Ascending aorta (tissue), 2 donors: ENCODE measurements at regions of chr17 and their contacts with region 1.

Region 1: DNA sequence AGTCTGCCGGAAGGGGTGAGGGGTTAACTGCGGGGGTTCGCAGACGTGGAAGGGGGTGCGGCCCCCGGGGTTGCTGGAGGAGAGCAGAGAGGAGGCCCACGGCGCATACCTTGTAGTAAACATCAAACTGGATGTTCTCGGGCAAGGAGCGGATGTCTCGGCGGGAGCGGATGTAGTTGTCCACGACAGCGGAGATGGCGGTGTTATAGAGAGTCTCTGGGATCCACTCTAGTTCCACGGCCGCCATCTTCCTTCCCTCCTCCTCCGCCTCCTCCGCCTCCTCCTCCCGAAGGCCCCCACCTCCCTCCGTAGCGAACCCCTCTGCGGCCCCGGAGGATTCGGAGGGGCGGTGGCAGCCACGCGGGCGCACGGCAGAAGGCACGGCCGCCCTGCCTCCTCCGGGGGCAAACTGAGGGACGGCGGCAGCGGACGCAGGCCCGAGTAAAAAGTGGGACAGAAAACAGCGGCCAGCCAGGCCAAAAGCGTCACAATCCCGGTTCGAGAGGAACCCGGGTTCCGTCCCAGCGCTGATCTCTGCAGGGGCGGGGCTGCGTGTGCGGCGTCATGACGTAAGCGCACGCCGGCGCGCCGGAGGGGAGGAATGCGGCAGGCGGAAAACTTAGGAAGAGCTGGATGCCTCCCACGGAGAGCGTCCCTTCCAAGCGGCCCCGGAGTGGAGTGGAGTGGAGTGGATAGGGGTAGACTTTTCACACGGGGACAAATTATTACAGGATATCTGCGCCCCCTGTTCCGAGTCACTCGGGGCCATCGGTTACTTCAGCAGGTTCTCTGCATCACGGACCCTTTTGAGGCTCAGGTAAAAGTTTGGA is at the start of gene APPBP2:
- DNase-seq: peak; percentile 27 to 90
- H3K4me3 ChIP-seq: peak within 1 kb of the TSS; percentile 96 to 97
- H3K27ac ChIP-seq: peak within 1 kb of the TSS; percentile 96 to 100
- H3K4me1 ChIP-seq: peaks cover 3 to 33% of the 10 kb centered on the region in 2 donors
- H3K27me3 ChIP-seq: no peaks in the 10 kb centered on the region
- CTCF ChIP-seq: no peak
- total RNA-seq, gene APPBP2: 8.6 TPM

Region 2: GRCh38 chr17:59466946-59467801 is 1058.7 kb before region 1 on chr17:
- intact Hi-C with region 1: no loop called
- DNase-seq: no peak
- H3K4me3 ChIP-seq: no peak overlapping the region
- H3K27ac ChIP-seq: no peak overlapping the region
- H3K4me1 ChIP-seq: no peaks in the 10 kb centered on the region
- H3K27me3 ChIP-seq: no peaks in the 10 kb centered on the region
- CTCF ChIP-seq: no peak

Region 3: GRCh38 chr17:59753522-59754467 is 772.1 kb before region 1 on chr17:
- intact Hi-C with region 1: no loop called
- DNase-seq: no peak
- H3K4me3 ChIP-seq: peak overlapping the region in 1 of 2 donors; percentile 30
- H3K27ac ChIP-seq: peak overlapping the region; percentile 56 to 65
- H3K4me1 ChIP-seq: peaks cover 0 to 17% of the 10 kb centered on the region in 2 donors
- H3K27me3 ChIP-seq: no peaks in the 10 kb centered on the region
- CTCF ChIP-seq: peak; percentile 60 to 69 (median 66)

Region 4: GRCh38 chr17:60392042-60392844 is 133.7 kb before region 1 on chr17 and contains the start of gene USP32:
- intact Hi-C with region 1: loop called (anchors 1 kb)
- DNase-seq: peak; percentile 94 to 99
- H3K4me3 ChIP-seq: peak within 1 kb of the TSS; percentile 90 to 91
- H3K27ac ChIP-seq: peak within 1 kb of the TSS; percentile 88 to 93
- H3K4me1 ChIP-seq: peaks cover 0 to 17% of the 10 kb centered on the region in 2 donors
- H3K27me3 ChIP-seq: no peaks in the 10 kb centered on the region
- CTCF ChIP-seq: peak in 2 of 3 experiments; percentile 22 to 25
- total RNA-seq, gene USP32: 11.9 TPM

Region 5: DNA sequence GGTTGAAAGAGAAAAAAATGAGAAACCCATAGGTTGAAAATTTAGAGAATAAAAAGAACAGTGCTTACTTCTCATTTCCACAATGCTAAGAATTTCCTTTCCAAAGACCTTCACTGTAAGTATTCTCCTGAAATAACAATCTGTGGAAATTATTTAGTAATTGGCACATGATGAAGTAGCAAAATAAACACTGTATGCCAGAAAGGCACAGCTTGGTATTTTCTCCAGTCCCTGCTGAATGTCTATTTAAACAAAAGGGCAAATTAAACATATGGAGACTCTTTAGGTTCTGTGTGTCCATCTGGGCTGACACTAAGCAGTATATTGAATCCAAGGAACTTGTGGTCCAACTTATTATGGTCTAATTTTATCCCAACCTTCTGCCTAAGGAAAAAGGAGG is 57.5 kb before region 1 on chr17:
- intact Hi-C with region 1: loop called (anchors 10 kb)
- DNase-seq: no peak
- H3K4me3 ChIP-seq: no peak overlapping the region
- H3K27ac ChIP-seq: peak overlapping the region in 1 of 2 donors; percentile 20
- H3K4me1 ChIP-seq: peaks cover 4 to 28% of the 10 kb centered on the region in 2 donors
- H3K27me3 ChIP-seq: no peaks in the 10 kb centered on the region
- CTCF ChIP-seq: no peak

Region 6: DNA sequence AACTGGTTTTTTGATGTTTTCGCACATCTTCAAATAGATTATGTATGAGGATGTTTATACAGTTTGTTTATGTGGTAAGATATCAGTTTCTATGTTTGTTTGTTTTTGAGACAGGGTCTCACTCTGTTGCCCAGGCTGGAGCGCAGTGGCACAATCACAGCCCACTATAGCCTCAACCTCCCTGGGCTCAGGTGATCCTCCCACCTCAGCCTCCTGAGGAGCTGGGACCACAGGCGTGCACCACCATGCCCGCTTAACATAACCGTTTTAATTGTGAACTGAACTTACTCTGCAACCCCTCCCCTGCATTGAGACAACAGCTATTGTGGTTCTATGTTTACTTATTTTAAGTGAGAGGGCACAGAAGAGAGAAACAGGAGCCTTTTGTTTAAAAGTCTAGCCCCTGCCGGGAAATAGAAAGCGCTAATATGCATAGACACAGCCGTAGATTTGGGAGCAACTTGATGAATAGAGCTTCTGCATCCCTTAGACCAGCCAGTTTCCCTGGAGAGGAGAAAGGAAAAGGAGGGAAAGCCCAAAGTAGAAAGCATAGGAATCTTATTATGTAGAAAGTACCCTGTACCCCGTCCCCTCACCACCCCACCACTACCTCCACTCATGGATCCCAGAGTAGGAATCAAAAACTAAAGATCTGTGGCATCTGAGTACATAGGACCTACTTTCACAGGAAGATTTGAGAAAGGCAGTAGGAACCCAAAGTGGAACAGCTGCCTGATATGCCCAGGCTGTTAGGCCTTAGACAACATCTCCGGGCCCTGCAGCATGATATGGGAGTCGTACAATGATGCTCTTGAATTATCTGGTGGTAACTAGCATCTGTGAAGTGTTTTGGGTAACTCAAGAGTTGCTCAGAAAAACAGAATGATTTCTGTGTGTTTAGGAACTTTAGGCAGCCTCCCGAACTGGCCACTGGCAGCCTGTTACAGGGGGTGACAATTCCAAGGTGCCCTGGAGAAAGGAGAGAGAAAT is 19.9 kb after region 1 on chr17:
- intact Hi-C with region 1: no loop called
- DNase-seq: no peak
- H3K4me3 ChIP-seq: no peak overlapping the region
- H3K27ac ChIP-seq: no peak overlapping the region
- H3K4me1 ChIP-seq: no peaks in the 10 kb centered on the region
- H3K27me3 ChIP-seq: no peaks in the 10 kb centered on the region
- CTCF ChIP-seq: no peak

Region 7: GRCh38 chr17:60577147-60577915 is 51.4 kb after region 1 on chr17:
- intact Hi-C with region 1: loop called (anchors 5 kb)
- DNase-seq: peak in 1 of 2 donors; percentile 71
- H3K4me3 ChIP-seq: peak overlapping the region; percentile 34 to 60
- H3K27ac ChIP-seq: peak overlapping the region; percentile 47 to 52
- H3K4me1 ChIP-seq: peaks cover 0 to 7% of the 10 kb centered on the region in 2 donors
- H3K27me3 ChIP-seq: no peaks in the 10 kb centered on the region
- CTCF ChIP-seq: peak in 2 of 3 experiments; percentile 37 to 56

Region 8: DNA sequence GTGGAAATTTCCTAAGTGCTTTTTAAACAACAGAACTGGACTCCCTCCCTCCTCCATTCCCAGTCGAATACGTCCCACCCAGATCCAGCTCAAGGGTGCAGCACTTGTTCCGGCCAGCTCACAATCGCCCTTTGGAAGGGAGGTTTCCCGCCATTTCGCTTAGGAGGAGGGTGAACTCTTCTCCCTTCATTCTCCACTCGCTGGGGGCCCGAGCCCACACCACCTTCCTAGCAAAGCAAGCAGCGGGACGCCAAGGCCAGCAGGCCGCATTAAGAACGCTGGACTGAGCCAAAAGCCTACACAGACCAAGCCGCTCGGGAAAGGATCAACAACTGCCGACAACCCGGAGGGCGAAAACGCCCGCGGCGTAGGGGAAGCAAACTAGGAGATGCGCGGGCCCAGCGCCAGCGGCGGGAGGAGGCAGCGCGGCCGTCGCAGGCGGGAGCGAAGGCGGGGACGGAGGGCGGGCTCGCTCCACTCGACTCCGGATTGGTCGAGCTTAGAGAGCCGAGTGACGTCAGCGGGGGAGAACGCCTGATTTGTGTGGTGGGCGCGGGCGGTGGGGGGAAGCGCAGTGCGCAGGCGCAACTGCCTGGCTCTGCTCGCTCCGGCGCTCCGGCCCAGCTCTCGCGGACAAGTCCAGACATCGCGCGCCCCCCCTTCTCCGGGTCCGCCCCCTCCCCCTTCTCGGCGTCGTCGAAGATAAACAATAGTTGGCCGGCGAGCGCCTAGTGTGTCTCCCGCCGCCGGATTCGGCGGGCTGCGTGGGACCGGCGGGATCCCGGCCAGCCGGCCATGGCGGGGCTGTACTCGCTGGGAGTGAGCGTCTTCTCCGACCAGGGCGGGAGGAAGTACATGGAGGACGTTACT is 74.0 kb after region 1 on chr17 and contains the start of gene PPM1D:
- intact Hi-C with region 1: loop called (anchors 1 kb)
- DNase-seq: peak; percentile 94 to 99
- H3K4me3 ChIP-seq: peak within 1 kb of the TSS; percentile 73 to 94
- H3K27ac ChIP-seq: peak within 1 kb of the TSS; percentile 97 to 98
- H3K4me1 ChIP-seq: peaks cover 0 to 15% of the 10 kb centered on the region in 2 donors
- H3K27me3 ChIP-seq: no peaks in the 10 kb centered on the region
- CTCF ChIP-seq: peak in 1 of 3 experiments; percentile 11
- total RNA-seq, gene PPM1D: 6.0 TPM

Region 9: GRCh38 chr17:60639019-60639330 is 113.1 kb after region 1 on chr17:
- intact Hi-C with region 1: loop called (anchors 5 kb)
- DNase-seq: no peak
- H3K4me3 ChIP-seq: no peak overlapping the region
- H3K27ac ChIP-seq: no peak overlapping the region
- H3K4me1 ChIP-seq: no peaks in the 10 kb centered on the region
- H3K27me3 ChIP-seq: no peaks in the 10 kb centered on the region
- CTCF ChIP-seq: peak in 1 of 3 experiments; percentile 1

Region 10: GRCh38 chr17:60677308-60678124 is 151.6 kb after region 1 on chr17 and contains the start of gene BCAS3:
- intact Hi-C with region 1: loop called (anchors 1 kb)
- DNase-seq: peak; percentile 98 to 99
- H3K4me3 ChIP-seq: peak within 1 kb of the TSS; percentile 71 to 79
- H3K27ac ChIP-seq: peak within 1 kb of the TSS; percentile 63 to 69
- H3K4me1 ChIP-seq: peaks cover 0 to 10% of the 10 kb centered on the region in 2 donors
- H3K27me3 ChIP-seq: no peaks in the 10 kb centered on the region
- CTCF ChIP-seq: no peak
- total RNA-seq, gene BCAS3: 75.9 TPM